H1 (cell line): ENCODE measurements at regions of chr3 and their contacts with region 1.

Region 1: DNA sequence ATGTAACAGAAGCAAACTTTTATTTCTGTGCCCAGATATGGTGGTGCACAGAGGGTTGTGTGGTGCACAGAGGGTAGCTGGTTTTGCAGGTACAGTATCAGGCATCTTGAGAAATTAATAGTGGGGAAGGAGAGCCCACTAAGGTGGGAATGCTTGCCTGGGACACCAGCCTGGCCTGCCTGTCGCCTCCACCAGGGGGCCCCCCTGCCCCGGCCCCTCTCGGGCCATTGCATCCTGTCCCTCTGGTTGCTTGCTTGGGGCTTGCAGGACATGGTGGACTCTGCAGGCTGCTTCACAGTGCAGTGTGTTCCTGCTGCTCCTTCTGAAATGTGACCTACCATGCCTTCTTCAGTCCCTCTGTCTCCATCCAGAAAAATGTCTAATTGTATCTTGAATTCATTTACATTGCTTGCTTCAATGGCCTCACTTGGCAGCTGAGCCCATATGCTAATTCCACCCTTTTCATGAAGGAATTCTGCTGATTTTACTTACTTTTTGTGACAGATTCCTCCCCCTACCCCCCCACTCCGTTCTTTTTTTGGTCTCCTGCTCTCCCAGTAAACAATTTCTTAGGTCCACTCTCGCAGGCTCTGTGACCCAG is 73.6 kb downstream of the EEFSEC start:
- DNase-seq: peak; percentile 29 to 88
- H3K4me3 ChIP-seq: no peak overlapping the region
- H3K27ac ChIP-seq: no peak overlapping the region
- H3K4me1 ChIP-seq: peaks cover 2 to 3% (median 2%) of the 10 kb centered on the region in 4 experiments; a peak in 5 of 7 replicates
- H3K27me3 ChIP-seq: no peaks in the 10 kb centered on the region; a peak in 1 of 7 replicates
- CTCF ChIP-seq: peak; percentile 89 to 97 (median 90)
- EP300 ChIP-seq: no peak
- POLR2A ChIP-seq: no peak
- RAD21 ChIP-seq: peak; percentile 81 to 91

Region 2: GRCh38 chr3:128242818-128243601 is 16.1 kb after region 1 on chr3:
- CTCF ChIA-PET with region 1: interaction called, 43 read pairs
- POLR2A ChIA-PET with region 1: no interaction called
- DNase-seq: peak in 1 of 2 experiments; percentile 29
- H3K4me3 ChIP-seq: no peak overlapping the region
- H3K27ac ChIP-seq: no peak overlapping the region
- H3K4me1 ChIP-seq: peaks cover 0 to 5% (median 0%) of the 10 kb centered on the region in 4 experiments; a peak in 1 of 7 replicates
- H3K27me3 ChIP-seq: no peaks in the 10 kb centered on the region
- CTCF ChIP-seq: no peak
- EP300 ChIP-seq: no peak
- POLR2A ChIP-seq: no peak
- RAD21 ChIP-seq: no peak

Region 3: DNA sequence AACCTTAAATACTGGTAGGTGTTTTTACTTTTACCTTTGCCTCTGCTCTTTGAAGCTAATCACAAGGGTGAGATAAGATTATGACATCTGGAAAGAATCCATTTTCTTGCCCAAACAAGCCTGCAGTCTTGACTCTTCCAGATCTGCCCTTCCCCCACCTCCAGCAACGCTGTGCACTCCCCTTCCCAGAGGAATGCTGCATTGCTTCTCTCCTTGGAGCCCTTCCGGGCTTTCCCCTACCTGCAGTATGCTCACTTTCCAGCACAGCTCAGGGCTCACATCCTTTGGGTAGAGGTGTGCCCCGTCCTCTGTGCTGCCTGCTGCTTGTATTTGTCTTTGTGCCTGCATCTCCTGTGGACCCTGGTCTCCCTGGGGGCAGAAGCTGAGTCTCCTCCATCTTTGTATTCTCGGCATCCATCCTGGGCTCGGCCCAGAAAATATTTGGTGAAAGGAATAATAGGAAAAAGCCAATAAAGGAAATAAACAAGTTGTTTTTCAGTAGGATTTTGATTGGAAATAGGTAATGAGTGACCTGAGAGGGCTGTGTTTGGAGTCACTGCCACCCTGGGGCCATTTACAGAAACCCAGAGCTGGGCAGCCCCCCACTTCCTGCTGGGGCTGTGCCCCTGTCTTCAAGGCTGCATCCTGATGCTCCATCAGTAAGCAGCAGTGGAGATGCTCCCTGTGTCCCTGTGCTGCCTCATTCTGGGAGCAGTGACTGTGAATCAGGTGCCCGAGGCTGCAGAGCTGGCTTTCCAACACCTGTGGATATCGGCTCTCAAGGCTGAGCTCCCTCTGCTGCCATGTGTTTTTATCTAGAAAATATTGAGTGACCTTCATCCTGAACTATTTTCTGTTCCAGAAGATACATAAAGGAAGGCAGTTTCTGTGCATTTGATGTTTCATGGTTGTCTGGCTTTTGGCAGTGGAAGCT is 43.9 kb after region 1 on chr3:
- CTCF ChIA-PET with region 1: interaction called, 29 read pairs
- POLR2A ChIA-PET with region 1: no interaction called
- DNase-seq: peak in 1 of 2 experiments; percentile 50
- H3K4me3 ChIP-seq: peak overlapping the region in 1 of 4 experiments; percentile 14; a peak in 1 of 8 replicates
- H3K27ac ChIP-seq: no peak overlapping the region
- H3K4me1 ChIP-seq: peaks cover 6 to 20% (median 13%) of the 10 kb centered on the region in 4 experiments
- H3K27me3 ChIP-seq: no peaks in the 10 kb centered on the region
- CTCF ChIP-seq: no peak
- EP300 ChIP-seq: no peak
- POLR2A ChIP-seq: no peak
- RAD21 ChIP-seq: no peak

Region 4: GRCh38 chr3:128307029-128307633 is 80.2 kb after region 1 on chr3:
- CTCF ChIA-PET with region 1: interaction called, 23 read pairs
- POLR2A ChIA-PET with region 1: no interaction called
- DNase-seq: peak in 1 of 2 experiments; percentile 43
- H3K4me3 ChIP-seq: no peak overlapping the region
- H3K27ac ChIP-seq: no peak overlapping the region
- H3K4me1 ChIP-seq: no peaks in the 10 kb centered on the region
- H3K27me3 ChIP-seq: no peaks in the 10 kb centered on the region
- CTCF ChIP-seq: peak in 2 of 3 experiments; percentile 12 to 17; a peak in 2 of 4 replicates
- EP300 ChIP-seq: no peak
- POLR2A ChIP-seq: no peak
- RAD21 ChIP-seq: peak; percentile 48 to 63

Region 5: GRCh38 chr3:128348805-128349531 is 122.1 kb after region 1 on chr3:
- CTCF ChIA-PET with region 1: interaction called, 17 read pairs
- POLR2A ChIA-PET with region 1: no interaction called
- DNase-seq: no peak
- H3K4me3 ChIP-seq: no peak overlapping the region
- H3K27ac ChIP-seq: peak overlapping the region; percentile 22; the same call in 1 of the 2 replicates
- H3K4me1 ChIP-seq: peaks cover 5 to 10% (median 9%) of the 10 kb centered on the region in 4 experiments
- H3K27me3 ChIP-seq: no peaks in the 10 kb centered on the region
- CTCF ChIP-seq: no peak
- EP300 ChIP-seq: no peak
- POLR2A ChIP-seq: no peak
- RAD21 ChIP-seq: no peak